Activated CD4-positive, alpha-beta T cell treated with anti-CD3 and anti-CD28 coated beads for 36 hours (primary cell): ENCODE measurements at regions of chr16 and their contacts with region 1.

Region 1: GRCh38 chr16:30650369-30651123 is at the start of gene PRR14:
- DNase-seq: peak; percentile 100
- ATAC-seq: peak; percentile 82
- H3K4me3 Mint-ChIP-seq: peak within 1 kb of the TSS; percentile 95
- H3K27ac Mint-ChIP-seq: peak within 1 kb of the TSS; percentile 97
- H3K4me1 Mint-ChIP-seq: peaks cover 21% of the 10 kb centered on the region
- H3K27me3 Mint-ChIP-seq: no peaks in the 10 kb centered on the region
- total RNA-seq, gene PRR14: 76.8 to 77.8 TPM

Region 2: GRCh38 chr16:30571695-30572600 is 78.6 kb before region 1 on chr16 and contains the start of gene ZNF688:
- CTCF ChIA-PET with region 1: no interaction called
- POLR2A ChIA-PET with region 1: no interaction called
- intact Hi-C with region 1: loop called (anchors 1 to 5 kb)
- DNase-seq: peak; percentile 95
- ATAC-seq: peak; percentile 79
- H3K4me3 Mint-ChIP-seq: peak within 1 kb of the TSS; percentile 87
- H3K27ac Mint-ChIP-seq: peak within 1 kb of the TSS; percentile 93
- H3K4me1 Mint-ChIP-seq: peaks cover 57% of the 10 kb centered on the region
- H3K27me3 Mint-ChIP-seq: no peaks in the 10 kb centered on the region
- total RNA-seq, gene ZNF688: 7.1 to 9.1 TPM

Region 3: DNA sequence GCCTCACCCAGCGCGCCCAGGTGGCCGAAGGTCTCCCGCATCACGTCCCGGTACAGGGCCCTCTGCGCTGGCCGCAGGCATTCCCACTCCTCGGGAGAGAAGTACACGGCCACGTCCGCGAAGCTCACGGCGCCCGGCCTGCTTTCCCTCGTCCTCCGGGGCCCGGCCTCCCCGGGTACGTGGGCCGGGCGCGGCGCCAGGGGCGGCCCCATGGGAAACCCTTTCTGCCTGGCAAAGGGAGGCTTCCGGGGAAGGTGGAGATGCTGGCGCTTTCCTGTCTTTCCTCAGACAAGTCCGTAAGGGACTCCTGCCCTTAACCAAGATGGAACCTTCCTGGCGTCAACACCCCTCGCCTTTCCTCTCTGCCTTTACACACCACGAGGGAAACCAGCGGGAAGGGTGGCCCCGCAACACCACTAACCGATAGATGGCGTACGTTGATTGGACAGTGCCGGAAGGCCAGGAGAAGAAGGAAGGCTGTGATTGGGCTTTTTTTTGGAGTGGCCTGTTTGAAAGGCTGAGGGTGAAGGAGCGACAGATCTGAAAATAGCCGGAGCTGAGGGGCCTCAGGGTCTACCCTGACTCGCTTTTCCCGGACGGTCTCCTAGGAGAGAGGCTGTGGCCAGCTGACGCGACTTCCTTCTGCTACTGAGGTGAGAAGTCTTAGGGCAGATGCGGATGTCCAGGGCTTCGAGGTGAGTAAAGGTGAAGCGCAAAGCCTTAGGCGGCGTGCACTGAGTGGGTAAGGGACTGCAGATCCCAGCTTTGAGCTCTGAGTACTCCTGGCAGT is 65.0 kb before region 1 on chr16 and contains the start of gene ZNF785:
- CTCF ChIA-PET with region 1: no interaction called
- POLR2A ChIA-PET with region 1: no interaction called
- intact Hi-C with region 1: loop called in 1 of 2 experiments (anchors 1 kb)
- DNase-seq: peak; percentile 96
- ATAC-seq: peak; percentile 99
- H3K4me3 Mint-ChIP-seq: peak within 1 kb of the TSS; percentile 87
- H3K27ac Mint-ChIP-seq: peak within 1 kb of the TSS; percentile 92
- H3K4me1 Mint-ChIP-seq: peaks cover 37% of the 10 kb centered on the region
- H3K27me3 Mint-ChIP-seq: no peaks in the 10 kb centered on the region
- total RNA-seq, gene ZNF785: 9.2 to 10.8 TPM

Region 4: GRCh38 chr16:30628627-30629540 is 21.7 kb before region 1 on chr16:
- CTCF ChIA-PET with region 1: interaction called, 7 read pairs
- POLR2A ChIA-PET with region 1: interaction called, 10 read pairs
- intact Hi-C with region 1: loop called (anchors 1 kb)
- DNase-seq: peak; percentile 95
- ATAC-seq: peak; percentile 93
- H3K4me3 Mint-ChIP-seq: peak overlapping the region; percentile 58
- H3K27ac Mint-ChIP-seq: peak overlapping the region; percentile 82
- H3K4me1 Mint-ChIP-seq: peaks cover 14% of the 10 kb centered on the region
- H3K27me3 Mint-ChIP-seq: no peaks in the 10 kb centered on the region

Region 5: DNA sequence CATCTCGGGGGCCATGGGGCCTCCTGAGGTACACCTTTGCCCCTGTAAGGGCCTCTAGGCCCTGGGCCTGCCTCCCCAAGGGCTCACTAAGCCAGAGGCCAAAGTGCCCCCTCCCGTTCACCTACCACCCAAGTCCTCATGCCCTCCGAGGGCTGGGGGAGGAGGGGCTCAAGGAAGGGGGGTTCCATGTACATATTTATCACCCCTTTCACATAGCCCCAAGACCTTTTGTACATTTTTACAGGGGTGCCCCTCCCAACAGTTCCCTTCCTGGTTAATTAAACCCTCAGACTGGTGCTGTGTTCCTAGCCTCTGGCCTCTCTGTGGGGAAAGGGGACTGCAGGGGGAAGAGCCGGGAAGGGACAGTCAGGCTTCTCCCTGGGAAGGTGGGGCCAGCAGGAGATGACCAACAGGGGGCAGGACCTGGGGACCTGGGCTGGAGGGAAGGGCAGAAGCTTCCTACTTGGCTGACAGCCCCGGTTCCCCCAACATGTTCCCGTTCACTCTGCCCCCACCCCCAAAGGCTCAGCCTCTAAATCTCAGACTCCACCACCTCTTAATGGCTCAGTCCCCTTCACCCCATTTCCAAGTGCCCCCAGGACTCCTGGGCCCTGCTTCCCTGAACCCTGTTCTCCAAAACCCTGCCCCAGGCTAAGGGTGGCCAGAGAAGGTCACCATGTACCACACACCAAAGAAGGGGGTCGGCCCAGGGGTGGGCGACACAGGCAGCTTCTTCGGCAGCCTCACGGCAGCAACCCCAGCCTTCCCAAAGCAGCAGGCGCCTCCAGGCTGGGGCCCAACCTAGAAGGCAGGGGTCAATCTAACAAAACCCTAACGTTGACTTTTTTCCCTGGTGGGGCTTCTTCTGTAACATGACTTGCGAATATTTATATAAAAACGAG is 19.6 kb after region 1 on chr16:
- CTCF ChIA-PET with region 1: no interaction called
- POLR2A ChIA-PET with region 1: no interaction called
- intact Hi-C with region 1: no loop called
- DNase-seq: no peak
- ATAC-seq: no peak
- H3K4me3 Mint-ChIP-seq: no peak overlapping the region
- H3K27ac Mint-ChIP-seq: no peak overlapping the region
- H3K4me1 Mint-ChIP-seq: peaks cover 2% of the 10 kb centered on the region
- H3K27me3 Mint-ChIP-seq: no peaks in the 10 kb centered on the region

Region 6: DNA sequence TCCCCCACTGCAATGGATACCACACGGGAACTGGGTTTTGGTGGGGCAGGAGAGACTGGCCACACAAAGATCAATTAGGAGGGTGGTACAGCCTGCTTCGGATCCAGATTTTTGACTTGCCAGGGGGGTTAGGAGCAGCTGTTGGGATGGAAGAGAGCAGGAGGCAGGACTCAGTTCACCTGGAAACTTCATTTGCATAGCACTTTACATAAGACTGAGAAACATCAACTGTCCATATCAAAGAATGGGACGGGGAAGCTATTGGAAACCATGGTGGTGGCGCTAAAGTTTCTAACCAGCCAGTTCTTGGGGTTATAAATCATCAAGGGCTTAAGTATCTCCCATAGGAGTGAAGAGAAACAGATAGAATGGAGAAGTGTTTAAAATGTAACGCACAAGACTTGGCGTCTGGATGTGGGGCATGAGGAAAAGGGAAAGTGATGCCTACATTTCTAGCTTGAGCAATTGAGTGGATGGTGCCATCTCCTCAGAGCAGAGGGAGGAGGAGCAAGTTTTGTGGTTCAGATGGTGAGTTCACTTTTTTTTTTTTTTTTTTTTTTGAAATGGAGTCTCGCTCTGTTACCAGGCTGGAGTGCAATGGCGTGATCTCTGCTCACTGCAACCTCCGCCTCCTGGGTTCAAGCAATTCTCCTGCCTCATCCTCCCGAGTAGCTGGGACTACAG is 42.0 kb after region 1 on chr16:
- CTCF ChIA-PET with region 1: interaction called, 13 read pairs
- POLR2A ChIA-PET with region 1: no interaction called
- intact Hi-C with region 1: no loop called
- DNase-seq: no peak
- ATAC-seq: no peak
- H3K4me3 Mint-ChIP-seq: no peak overlapping the region
- H3K27ac Mint-ChIP-seq: no peak overlapping the region
- H3K4me1 Mint-ChIP-seq: peaks cover 15% of the 10 kb centered on the region
- H3K27me3 Mint-ChIP-seq: no peaks in the 10 kb centered on the region